Left colon (tissue), 2 donors: ENCODE measurements at regions of chr19 and their contacts with region 1.

Region 1: GRCh38 chr19:588093-588740 is 1.5 kb upstream of the HCN2 start:
- DNase-seq: peak; percentile 71 to 75
- ATAC-seq: peak; percentile 63

Region 2: DNA sequence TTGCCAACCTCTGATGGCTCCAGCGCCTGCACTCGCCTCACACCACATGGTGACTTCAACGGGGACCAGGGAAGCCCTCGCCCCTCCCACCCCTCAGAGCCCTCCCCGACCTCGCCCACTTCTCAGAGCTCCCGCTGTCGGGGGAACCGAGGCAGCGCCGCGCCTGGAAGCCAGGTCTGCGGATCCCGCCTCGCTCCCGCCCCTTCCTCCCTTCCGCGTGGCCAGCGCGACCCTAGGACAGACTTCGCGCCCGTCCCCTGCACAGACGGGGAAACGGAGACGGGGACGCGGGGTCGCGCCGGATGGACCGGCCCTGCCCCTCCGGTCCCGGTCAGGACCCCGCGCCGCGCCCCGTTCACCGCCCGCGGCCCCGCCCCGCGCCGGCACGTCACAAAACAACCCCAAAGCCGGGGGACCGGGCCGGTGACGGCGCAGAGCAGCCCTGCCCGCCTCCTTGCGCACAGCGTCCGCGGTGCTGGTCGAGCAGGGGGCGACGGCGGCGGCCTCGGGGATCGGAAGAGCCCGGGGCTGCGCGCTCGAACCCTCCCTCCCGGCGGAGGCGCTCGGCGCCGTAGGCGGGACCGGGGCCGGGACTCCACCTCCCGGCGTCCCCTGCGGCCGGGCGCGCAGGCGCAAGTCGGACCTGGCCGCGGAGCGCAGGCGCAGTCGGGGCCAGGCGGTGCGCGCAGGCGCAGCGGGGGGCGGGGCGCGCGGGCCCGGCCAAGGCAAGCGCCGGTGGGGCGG is 57.0 kb before region 1 on chr19:
- intact Hi-C with region 1: no loop called
- DNase-seq: peak; percentile 80 to 84
- ATAC-seq: peak; percentile 75

Region 3: DNA sequence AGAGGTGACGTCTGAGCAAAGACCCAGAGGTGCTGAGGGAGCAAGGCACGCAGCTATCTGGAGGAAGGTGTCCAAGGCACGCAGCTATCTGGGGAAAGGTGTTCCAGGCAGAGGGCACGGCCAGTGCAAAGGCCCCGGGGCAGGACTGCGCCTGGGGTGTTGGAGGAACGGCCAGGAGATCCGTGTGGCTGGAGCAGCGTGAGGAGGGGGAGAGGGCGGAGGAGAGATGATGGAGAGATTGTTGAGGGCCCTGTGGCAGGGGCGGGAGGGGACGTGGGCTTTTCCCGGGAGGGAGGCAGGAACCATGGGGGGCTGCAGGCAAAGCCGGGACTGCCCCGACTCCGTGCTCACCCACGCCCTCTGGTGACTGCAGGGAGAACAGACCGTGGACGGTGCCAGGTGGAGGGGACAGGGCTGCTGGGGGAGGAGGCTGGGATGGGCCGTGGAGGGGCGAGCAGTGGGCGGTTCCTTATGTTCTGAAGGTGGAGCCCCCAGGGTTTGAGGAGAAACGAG is 149.4 kb after region 1 on chr19:
- intact Hi-C with region 1: loop called in 1 of 2 experiments (anchors 10 kb)
- DNase-seq: peak; percentile 46 to 65
- ATAC-seq: peak; percentile 36